ENCODE measurements at regions of chr1 and their contacts with region 1.

Region 1: GRCh38 chr1:156705918-156706656 is 704 bp upstream of the CRABP2 start:
- DNase-seq: peak; percentile 69
- H3K4me3 Mint-ChIP-seq: peak overlapping the region; percentile 70
- H3K27ac Mint-ChIP-seq: no peak overlapping the region
- H3K4me1 Mint-ChIP-seq: peaks cover 21% of the 10 kb centered on the region
- H3K27me3 Mint-ChIP-seq: peaks cover 38% of the 10 kb centered on the region

Region 2: DNA sequence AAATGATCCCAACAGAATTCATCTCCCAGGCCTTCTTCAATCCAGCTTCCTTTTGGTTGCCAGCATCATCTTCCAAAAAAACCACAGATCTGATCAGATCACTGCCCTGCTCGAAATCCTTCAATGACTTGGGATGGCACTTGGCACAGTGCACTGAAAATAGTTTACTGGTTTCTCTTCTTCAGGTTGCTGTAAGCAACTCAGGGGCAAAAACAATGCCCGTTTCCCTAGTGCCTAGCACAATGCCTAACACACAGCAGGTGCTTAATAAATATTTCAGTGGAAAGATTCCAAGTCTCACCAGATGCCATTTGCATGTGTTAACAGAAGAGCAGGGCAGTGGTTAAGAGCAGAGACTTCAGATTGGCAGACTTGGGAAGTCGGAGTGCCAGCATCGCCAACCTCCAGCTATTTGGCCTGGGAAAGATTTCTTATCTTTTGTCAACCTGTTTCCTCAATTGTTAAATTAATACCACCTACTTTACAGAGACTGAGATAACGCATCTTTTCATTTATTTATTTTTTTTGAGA is 11.3 kb after region 1 on chr1:
- CTCF ChIA-PET with region 1: interaction called, 18 read pairs
- POLR2A ChIA-PET with region 1: interaction called, 5 read pairs
- DNase-seq: no peak
- H3K4me3 Mint-ChIP-seq: no peak overlapping the region
- H3K27ac Mint-ChIP-seq: no peak overlapping the region
- H3K4me1 Mint-ChIP-seq: peaks cover 9% of the 10 kb centered on the region
- H3K27me3 Mint-ChIP-seq: no peaks in the 10 kb centered on the region

Region 3: DNA sequence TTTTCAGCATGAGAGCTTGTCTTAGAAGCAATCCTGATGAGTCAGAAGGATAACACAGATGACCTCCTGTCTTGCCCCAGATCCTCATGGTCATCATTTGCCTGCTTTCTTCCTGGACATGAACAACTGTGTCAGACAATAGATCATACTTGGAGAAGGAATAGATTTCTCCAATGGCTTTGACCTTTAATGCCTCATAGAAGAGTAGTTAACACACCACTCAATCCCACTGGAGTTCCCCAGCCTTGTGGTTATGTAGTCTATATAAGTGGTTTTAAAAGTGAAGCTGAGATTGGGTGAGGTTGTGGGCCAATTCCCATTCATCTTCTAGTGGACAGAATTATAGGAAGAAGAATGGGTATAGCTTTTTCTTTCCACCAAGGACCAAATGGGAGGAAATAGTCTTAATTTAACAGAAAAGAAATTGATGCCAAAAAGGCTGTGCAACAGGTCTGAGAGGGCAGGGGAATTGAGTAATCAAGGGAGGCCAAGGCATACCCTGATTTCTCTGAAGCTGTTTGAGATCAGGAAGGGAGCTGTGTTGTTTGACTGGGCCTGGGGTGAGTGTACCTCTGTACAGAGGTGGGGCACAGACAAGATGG is 75.6 kb after region 1 on chr1:
- CTCF ChIA-PET with region 1: no interaction called
- POLR2A ChIA-PET with region 1: no interaction called
- DNase-seq: no peak
- H3K4me3 Mint-ChIP-seq: no peak overlapping the region
- H3K27ac Mint-ChIP-seq: no peak overlapping the region
- H3K4me1 Mint-ChIP-seq: peaks cover 32% of the 10 kb centered on the region
- H3K27me3 Mint-ChIP-seq: no peaks in the 10 kb centered on the region

Region 4: GRCh38 chr1:156797212-156797871 is 91.3 kb after region 1 on chr1:
- CTCF ChIA-PET with region 1: no interaction called
- POLR2A ChIA-PET with region 1: no interaction called
- DNase-seq: peak; percentile 70
- H3K4me3 Mint-ChIP-seq: no peak overlapping the region
- H3K27ac Mint-ChIP-seq: no peak overlapping the region
- H3K4me1 Mint-ChIP-seq: peaks cover 24% of the 10 kb centered on the region
- H3K27me3 Mint-ChIP-seq: no peaks in the 10 kb centered on the region

Region 5: GRCh38 chr1:156948708-156949107 is 242.6 kb after region 1 on chr1:
- CTCF ChIA-PET with region 1: no interaction called
- POLR2A ChIA-PET with region 1: no interaction called
- DNase-seq: no peak
- H3K4me3 Mint-ChIP-seq: no peak overlapping the region
- H3K27ac Mint-ChIP-seq: no peak overlapping the region
- H3K4me1 Mint-ChIP-seq: no peaks in the 10 kb centered on the region
- H3K27me3 Mint-ChIP-seq: peaks cover 2% of the 10 kb centered on the region

Measured in activated CD4-positive, alpha-beta memory T cell treated with anti-CD3 and anti-CD28 coated beads, Interleukin-2, amount 10 ng/mL, durations not matched to agents 7 days and 5 days (primary cell).